Heart right ventricle (tissue), 16 donors: ENCODE measurements at regions of chr13 and their contacts with region 1.

Region 1: GRCh38 chr13:52159321-52160086 is at the start of gene NEK3:
- DNase-seq: peak; percentile 77 to 79
- ATAC-seq: peak; percentile 92 to 95 (median 94)
- H3K4me3 ChIP-seq: peak within 1 kb of the TSS; percentile 67 to 100 (median 96)
- H3K27ac ChIP-seq: peak within 1 kb of the TSS; percentile 88 to 97 (median 94)
- H3K4me1 ChIP-seq: peaks cover 3 to 63% (median 20%) of the 10 kb centered on the region in 9 donors
- H3K27me3 ChIP-seq: no peaks in the 10 kb centered on the region
- CTCF ChIP-seq: no peak
- total RNA-seq, gene NEK3: 4.5 to 7.1 (median 5.8) TPM

Region 2: GRCh38 chr13:51818781-51819511 is 340.6 kb before region 1 on chr13:
- intact Hi-C with region 1: no loop called
- DNase-seq: no peak
- ATAC-seq: peak in 4 of 8 donors; percentile 16 to 33 (median 28)
- H3K4me3 ChIP-seq: no peak overlapping the region
- H3K27ac ChIP-seq: peak overlapping the region in 8 of 10 donors; percentile 43 to 83 (median 65)
- H3K4me1 ChIP-seq: peaks cover 4 to 61% (median 26%) of the 10 kb centered on the region in 9 donors
- H3K27me3 ChIP-seq: no peaks in the 10 kb centered on the region
- CTCF ChIP-seq: no peak

Region 3: GRCh38 chr13:52104624-52105023 is 54.9 kb before region 1 on chr13:
- intact Hi-C with region 1: no loop called
- DNase-seq: no peak
- ATAC-seq: no peak
- H3K4me3 ChIP-seq: no peak overlapping the region
- H3K27ac ChIP-seq: no peak overlapping the region
- H3K4me1 ChIP-seq: no peaks in the 10 kb centered on the region
- H3K27me3 ChIP-seq: no peaks in the 10 kb centered on the region
- CTCF ChIP-seq: no peak

Region 4: GRCh38 chr13:52194184-52194868 is 34.8 kb after region 1 on chr13:
- intact Hi-C with region 1: loop called in 2 of 10 experiments (anchors 2 to 5 kb)
- DNase-seq: peak; percentile 81 to 86
- ATAC-seq: peak; percentile 90 to 96 (median 94)
- H3K4me3 ChIP-seq: peak overlapping the region; percentile 34 to 92 (median 76)
- H3K27ac ChIP-seq: peak overlapping the region; percentile 41 to 93 (median 82)
- H3K4me1 ChIP-seq: peaks cover 0 to 30% (median 26%) of the 10 kb centered on the region in 9 donors
- H3K27me3 ChIP-seq: no peaks in the 10 kb centered on the region
- CTCF ChIP-seq: peak in 3 of 9 donors; percentile 26 to 32 (median 29)